Left ventricle myocardium inferior (tissue), 1 donor: ENCODE measurements at regions of chr10 and their contacts with region 1.

Region 1: DNA sequence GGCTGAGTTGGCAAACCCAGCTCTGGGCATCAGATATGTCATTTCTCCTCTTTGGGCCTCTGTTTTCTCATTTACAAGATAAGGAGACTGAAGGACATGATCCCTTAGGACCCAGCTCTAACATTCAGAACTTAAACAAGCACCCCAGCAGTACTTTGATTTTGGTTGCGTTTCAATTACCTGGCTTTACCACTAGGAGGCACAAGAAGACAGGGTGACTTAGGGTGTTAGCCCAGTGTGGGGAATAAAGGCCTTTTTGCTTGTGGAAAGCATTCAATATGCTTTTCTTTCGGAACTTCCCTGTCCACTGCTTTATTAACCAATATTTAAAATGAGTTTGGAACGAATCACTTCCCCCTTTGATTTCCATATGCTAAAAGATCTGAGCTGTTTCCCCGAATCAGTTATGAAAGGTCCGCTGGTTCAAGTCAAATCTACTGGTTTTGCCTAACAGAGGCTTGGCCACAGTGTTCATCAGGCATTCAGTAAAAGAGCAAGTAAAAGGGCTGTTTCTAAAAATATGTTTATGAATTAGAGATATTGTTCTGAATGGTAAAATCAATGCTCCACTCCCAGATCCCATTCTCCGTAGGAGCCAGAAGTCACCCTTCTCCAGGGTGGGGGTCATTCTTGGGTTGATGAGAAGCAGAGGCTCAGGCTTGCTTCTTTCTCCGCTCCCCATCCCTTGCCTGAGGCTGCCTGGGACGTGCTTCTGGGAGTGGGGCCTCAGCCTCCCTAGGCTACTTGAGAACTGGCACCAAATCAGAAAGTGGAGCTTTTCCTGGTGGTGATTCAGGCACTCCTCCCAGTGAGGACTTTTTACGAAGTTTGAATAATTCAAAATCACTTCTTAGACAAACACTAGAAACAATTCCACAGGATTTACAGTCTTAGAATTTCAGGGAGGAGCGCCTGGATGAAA is 105.5 kb downstream of the MYOF start:
- DNase-seq: no peak
- H3K4me3 ChIP-seq: peak overlapping the region; percentile 29
- H3K27ac ChIP-seq: peak overlapping the region; percentile 79
- H3K4me1 ChIP-seq: peaks cover 14% of the 10 kb centered on the region
- H3K27me3 ChIP-seq: no peaks in the 10 kb centered on the region
- CTCF ChIP-seq: peak; percentile 94

Region 2: DNA sequence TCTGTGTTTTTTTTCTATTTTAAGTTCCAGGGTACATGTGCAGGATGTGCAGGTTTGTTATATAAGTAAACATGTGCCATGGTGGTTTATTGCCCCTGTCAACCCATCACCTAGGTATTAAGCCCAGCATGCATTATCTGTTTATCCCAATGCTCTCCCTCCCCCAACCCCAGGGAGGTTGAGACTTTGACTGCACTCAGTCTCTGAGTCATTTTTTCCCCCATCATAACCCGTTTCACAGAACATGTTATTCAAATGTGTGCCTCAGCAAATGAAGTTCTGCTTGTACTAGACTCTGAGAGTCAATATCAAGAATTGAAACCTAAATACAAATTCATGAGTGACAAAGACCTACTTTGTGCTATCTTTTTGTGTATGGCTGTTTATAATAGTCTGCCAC is 386.0 kb before region 1 on chr10:
- intact Hi-C with region 1: no loop called
- DNase-seq: no peak
- H3K4me3 ChIP-seq: no peak overlapping the region
- H3K27ac ChIP-seq: no peak overlapping the region
- H3K4me1 ChIP-seq: no peaks in the 10 kb centered on the region
- H3K27me3 ChIP-seq: no peaks in the 10 kb centered on the region
- CTCF ChIP-seq: no peak

Region 3: DNA sequence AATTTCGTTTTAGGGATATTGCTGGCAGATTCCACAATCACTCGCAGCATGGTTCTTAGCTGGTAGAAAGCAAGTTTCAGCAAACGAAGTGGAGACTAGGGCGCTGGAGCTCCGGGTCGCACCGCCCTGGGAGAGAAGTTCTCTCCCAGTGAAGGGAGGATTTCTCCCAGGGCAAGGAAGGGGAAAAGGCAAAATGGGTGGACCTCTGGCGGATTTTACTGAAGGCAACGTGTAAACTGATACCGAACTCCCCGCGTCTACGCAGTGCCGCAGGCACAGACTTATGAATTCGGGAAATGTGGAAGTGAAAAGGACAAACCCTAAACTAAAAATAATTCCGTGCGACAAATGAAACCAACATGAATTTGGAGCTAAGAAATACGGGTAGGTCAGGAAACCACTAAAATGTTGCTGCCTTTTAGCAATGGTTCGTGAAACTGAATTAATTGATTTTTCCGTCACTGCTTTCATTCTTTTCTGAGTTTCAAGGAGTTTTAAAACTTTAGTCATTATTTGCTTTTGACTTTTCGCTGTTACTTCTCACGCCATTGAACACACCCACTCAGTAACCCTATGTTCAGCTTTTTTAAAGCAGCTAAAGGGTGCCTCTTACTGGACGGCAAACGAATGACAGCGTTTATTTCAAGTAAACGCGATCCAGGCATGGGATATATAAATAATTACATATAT is 105.7 kb after region 1 on chr10 and contains the start of gene MYOF:
- intact Hi-C with region 1: loop called (anchors 2 kb)
- DNase-seq: peak; percentile 33
- H3K4me3 ChIP-seq: peak within 1 kb of the TSS; percentile 79
- H3K27ac ChIP-seq: peak within 1 kb of the TSS; percentile 79
- H3K4me1 ChIP-seq: peaks cover 29% of the 10 kb centered on the region
- H3K27me3 ChIP-seq: no peaks in the 10 kb centered on the region
- CTCF ChIP-seq: peak; percentile 71
- total RNA-seq, gene MYOF: 43.6 TPM